PC-9 (cell line): ENCODE measurements at regions of chr7 and their contacts with region 1.

Region 1: DNA sequence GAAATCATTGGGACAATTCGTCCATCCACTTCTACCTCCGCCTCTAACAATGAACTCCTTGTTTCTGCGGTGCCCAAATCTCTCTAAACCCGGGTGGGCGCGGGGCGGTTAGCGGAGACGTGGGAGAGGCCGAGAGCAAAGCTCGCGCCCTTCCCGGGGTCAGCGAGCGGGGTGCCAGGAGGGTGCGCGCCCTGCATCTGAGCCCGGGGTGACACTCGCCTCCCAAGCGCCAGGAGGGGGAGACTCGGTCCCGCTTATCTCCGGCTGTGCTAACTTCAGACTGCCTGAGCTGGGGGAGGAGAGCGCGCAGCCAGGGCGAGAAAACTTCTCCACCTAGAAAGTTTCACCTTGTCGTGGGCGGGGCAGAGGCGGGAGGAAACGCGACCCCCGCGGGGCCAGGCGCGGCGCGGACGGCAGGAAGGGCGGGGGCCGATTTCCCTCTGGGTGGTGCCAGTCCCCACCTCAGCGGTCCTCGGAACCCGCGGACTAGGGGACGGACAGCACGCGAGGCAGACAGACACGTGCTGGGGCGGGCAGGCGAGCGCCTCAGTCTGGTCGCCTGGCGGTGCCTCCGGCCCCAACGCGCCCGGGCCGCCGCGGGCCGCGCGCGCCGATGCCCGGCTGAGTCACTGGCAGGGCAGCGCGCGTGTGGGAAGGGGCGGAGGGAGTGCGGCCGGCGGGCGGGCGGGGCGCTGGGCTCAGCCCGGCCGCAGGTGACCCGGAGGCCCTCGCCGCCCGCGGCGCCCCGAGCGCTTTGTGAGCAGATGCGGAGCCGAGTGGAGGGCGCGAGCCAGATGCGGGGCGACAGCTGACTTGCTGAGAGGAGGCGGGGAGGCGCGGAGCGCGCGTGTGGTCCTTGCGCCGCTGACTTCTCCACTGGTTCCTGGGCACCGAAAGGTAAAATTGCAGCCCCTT is at the start of gene MET:
- DNase-seq: peak; percentile 82 to 98
- H3K4me3 ChIP-seq: peak within 1 kb of the TSS; percentile 98
- H3K27ac ChIP-seq: peak within 1 kb of the TSS; percentile 90
- H3K4me1 ChIP-seq: peaks cover 40% of the 10 kb centered on the region
- H3K27me3 ChIP-seq: no peaks in the 10 kb centered on the region
- CTCF ChIP-seq: peak; percentile 76
- total RNA-seq, gene MET: 237 and 287 TPM in 2 replicates

Region 2: DNA sequence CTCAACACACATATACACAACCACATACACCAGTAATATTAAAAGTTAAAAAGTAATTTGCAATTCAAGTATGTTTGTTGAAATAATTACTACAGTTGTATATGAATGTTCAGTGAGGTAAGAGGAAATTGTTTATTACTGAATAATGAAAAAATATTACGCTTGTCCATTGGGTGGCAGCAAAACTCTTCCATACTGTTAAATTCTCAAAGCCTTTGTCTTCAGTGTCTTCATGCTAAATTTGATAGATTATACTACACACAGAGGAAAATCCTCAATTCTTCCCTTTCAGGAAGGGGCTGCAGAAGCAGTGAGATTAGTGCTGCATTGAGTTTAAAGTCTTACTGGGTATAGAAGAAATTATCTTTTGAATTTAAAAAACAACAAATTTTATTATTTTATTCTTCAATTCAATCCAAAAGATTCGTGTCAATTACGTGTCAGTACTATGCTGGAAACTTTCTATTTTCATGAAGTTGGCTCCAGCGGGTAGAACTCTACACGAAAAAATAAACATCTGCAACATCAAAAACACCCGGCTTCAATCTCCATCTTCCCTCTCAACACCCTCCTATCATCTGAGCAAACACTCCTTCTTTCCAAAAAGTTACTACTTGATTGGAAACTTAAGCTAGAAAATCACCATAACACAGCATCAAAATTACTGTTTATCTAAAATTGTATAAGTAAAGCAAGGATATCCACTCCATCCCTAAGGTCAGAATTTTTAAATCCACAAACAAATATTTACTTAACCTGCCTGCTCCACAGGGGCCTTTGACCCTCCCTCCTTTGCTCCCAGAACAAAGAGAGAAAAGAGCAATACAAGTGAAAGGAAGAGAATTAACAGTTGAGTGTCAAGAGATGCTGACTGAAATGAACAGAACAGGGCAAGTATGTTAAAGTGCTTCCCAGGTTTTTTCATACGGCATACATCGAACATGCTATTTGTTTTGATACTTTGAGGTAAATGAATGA is 498.6 kb before region 1 on chr7:
- CTCF ChIA-PET with region 1: no interaction called
- POLR2A ChIA-PET with region 1: interaction called, 5 read pairs
- intact Hi-C with region 1: loop called (anchors 5 kb)
- DNase-seq: peak; percentile 26 to 48
- H3K4me3 ChIP-seq: no peak overlapping the region
- H3K27ac ChIP-seq: no peak overlapping the region
- H3K4me1 ChIP-seq: peaks cover 11% of the 10 kb centered on the region; the same call in 1 of the 2 replicates
- H3K27me3 ChIP-seq: no peaks in the 10 kb centered on the region
- CTCF ChIP-seq: peak; percentile 84

Region 3: DNA sequence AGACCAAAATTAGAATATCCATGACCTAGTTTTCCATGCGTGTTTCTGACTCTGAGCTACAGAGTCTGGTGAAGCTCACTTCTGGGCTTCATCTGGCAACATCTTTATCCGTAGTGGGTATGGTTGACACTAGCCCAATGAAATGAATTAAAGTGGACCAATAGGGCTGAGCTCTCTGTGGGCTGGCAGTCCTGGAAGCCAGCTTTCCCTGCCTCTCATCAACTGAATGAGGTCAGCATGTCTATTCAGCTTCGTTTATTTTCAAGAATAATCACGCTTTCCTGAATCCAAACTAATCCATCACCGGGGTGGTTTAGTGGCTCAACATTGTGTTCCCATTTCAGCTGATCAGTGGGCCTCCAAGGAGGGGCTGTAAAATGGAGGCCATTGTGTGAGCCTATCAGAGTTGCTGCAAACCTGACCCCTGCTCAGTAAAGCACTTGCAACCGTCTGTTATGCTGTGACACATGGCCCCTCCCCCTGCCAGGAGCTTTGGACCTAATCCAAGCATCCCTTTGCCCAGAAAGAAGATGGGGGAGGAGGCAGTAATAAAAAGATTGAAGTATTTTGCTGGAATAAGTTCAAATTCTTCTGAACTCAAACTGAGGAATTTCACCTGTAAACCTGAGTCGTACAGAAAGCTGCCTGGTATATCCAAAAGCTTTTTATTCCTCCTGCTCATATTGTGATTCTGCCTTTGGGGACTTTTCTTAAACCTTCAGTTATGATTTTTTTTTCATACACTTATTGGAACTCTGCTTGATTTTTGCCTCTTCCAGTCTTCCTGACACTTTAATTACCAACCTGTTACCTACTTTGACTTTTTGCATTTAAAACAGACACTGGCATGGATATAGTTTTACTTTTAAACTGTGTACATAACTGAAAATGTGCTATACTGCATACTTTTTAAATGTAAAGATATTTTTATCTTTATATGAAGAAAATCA is 111.6 kb before region 1 on chr7:
- CTCF ChIA-PET with region 1: no interaction called
- POLR2A ChIA-PET with region 1: no interaction called
- intact Hi-C with region 1: no loop called
- DNase-seq: no peak
- H3K4me3 ChIP-seq: no peak overlapping the region
- H3K27ac ChIP-seq: no peak overlapping the region
- H3K4me1 ChIP-seq: no peaks in the 10 kb centered on the region
- H3K27me3 ChIP-seq: no peaks in the 10 kb centered on the region
- CTCF ChIP-seq: no peak

Region 4: GRCh38 chr7:116588641-116589594 is 83.0 kb before region 1 on chr7:
- CTCF ChIA-PET with region 1: interaction called, 5 read pairs
- POLR2A ChIA-PET with region 1: no interaction called
- intact Hi-C with region 1: loop called (anchors 1 kb)
- DNase-seq: peak in 1 of 2 experiments; percentile 6
- H3K4me3 ChIP-seq: no peak overlapping the region
- H3K27ac ChIP-seq: no peak overlapping the region
- H3K4me1 ChIP-seq: peaks cover 14% of the 10 kb centered on the region
- H3K27me3 ChIP-seq: no peaks in the 10 kb centered on the region
- CTCF ChIP-seq: peak; percentile 94

Region 5: DNA sequence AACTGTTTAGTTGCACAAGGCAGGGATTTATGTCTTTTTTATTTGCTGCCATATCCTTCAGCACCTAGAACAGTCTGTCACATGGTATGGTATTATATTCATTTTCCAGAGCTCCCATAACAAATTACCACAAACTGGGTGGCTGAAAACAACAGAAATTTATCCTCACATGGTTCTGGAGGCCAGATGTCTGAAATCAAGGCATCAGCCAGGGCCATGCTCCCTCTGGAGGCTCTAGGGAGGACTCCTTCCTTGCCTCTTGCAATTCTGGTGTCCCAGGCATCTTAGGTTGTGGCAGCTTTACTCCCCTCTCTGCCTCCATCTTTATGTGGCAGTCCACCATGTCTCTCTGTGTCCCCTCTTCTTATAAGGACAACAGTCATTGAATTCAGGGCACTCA is 43.1 kb after region 1 on chr7:
- CTCF ChIA-PET with region 1: interaction called, 7 read pairs
- POLR2A ChIA-PET with region 1: interaction called, 4 read pairs
- intact Hi-C with region 1: loop called (anchors 1 kb)
- DNase-seq: no peak
- H3K4me3 ChIP-seq: no peak overlapping the region
- H3K27ac ChIP-seq: no peak overlapping the region
- H3K4me1 ChIP-seq: peaks cover 35% of the 10 kb centered on the region
- H3K27me3 ChIP-seq: no peaks in the 10 kb centered on the region
- CTCF ChIP-seq: no peak

Region 6: GRCh38 chr7:116782177-116782711 is 110.3 kb after region 1 on chr7:
- CTCF ChIA-PET with region 1: no interaction called
- POLR2A ChIA-PET with region 1: no interaction called
- intact Hi-C with region 1: loop called (anchors 1 kb)
- DNase-seq: peak in 1 of 2 experiments; percentile 90
- H3K4me3 ChIP-seq: no peak overlapping the region
- H3K27ac ChIP-seq: peak overlapping the region; percentile 85
- H3K4me1 ChIP-seq: peaks cover 88% of the 10 kb centered on the region
- H3K27me3 ChIP-seq: no peaks in the 10 kb centered on the region
- CTCF ChIP-seq: no peak

Region 7: DNA sequence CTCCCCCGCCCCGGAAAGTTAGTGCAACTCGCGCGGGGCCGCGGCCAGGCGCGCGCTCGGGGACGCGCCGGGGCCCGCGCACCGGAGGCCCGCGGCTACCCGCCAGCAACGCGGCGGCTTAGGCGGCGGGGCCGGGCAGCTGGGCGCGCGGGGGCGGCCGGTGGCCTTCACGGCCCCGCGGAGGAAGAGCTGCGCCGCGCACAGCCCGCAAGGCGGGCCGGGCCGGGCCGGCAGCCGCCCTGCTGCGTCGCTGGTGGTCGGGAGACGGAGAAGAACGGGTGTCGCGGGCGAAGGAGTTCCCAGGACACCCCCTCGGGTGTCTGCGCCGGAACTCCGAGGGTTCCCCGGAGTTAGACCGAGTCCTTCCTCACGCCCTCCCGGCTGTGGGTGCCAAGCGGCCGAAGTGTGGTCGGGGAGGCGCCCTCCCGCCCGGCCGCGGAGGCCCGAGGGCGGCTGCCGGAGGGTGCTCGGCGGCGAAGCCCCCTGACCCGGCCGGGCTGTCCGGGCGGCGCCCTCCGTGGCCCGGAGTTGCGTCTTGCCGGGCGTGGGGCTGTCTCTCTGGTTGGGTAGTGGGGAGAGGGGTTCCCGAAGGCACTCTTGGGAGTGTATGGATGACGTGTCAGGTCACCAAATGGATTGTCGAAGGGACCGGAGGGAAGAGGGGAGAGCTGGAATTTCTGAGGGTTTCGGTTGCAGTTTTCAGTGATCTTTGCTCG is 281.9 kb after region 1 on chr7:
- CTCF ChIA-PET with region 1: no interaction called
- POLR2A ChIA-PET with region 1: no interaction called
- intact Hi-C with region 1: loop called (anchors 5 kb)
- DNase-seq: peak; percentile 63 to 65
- H3K4me3 ChIP-seq: peak overlapping the region; percentile 95
- H3K27ac ChIP-seq: peak overlapping the region; percentile 85
- H3K4me1 ChIP-seq: peaks cover 24% of the 10 kb centered on the region
- H3K27me3 ChIP-seq: no peaks in the 10 kb centered on the region
- CTCF ChIP-seq: no peak